Ascending aorta (tissue), 2 donors: ENCODE measurements at regions of chr15 and their contacts with region 1.

Region 1: DNA sequence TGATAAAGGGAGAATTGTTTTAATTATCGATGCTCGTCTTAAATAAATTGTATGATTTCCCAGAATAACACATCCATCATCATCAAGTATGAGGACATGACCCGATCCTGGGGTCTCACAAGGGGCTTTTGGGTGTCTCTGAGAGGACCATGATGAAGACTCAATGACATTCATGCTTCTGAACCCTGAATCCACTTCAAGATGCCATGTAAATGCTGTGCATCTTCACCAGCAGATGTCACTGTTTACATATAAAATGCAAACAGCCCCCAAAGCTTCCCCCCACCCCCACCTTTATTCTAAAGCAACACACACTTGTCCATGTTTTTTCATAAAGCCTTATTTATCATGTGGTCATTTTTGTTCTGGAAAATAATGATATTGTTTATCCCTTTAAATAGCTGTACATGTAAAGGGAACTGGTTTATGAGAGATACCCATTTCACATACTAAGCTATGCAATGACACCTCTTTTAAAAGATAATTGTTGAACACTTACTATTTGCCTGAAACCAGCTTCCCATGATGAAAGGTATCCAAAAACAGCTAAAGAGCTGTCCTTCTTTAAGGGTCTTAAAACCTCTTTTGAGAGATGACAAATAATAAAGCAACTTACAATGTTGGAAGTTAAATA is 69.7 kb upstream of the UBE3A start:
- DNase-seq: no peak
- H3K4me3 ChIP-seq: no peak overlapping the region
- H3K27ac ChIP-seq: no peak overlapping the region
- H3K4me1 ChIP-seq: peaks cover 0 to 6% of the 10 kb centered on the region in 2 donors
- H3K27me3 ChIP-seq: no peaks in the 10 kb centered on the region
- CTCF ChIP-seq: peak; percentile 42 to 86 (median 73)

Region 2: GRCh38 chr15:25469377-25469776 is 39.1 kb before region 1 on chr15:
- intact Hi-C with region 1: no loop called
- DNase-seq: no peak
- H3K4me3 ChIP-seq: no peak overlapping the region
- H3K27ac ChIP-seq: no peak overlapping the region
- H3K4me1 ChIP-seq: no peaks in the 10 kb centered on the region
- H3K27me3 ChIP-seq: no peaks in the 10 kb centered on the region
- CTCF ChIP-seq: no peak

Region 3: GRCh38 chr15:25641762-25642161 is 133.3 kb after region 1 on chr15:
- intact Hi-C with region 1: no loop called
- DNase-seq: peak in 1 of 2 donors; percentile 8
- H3K4me3 ChIP-seq: no peak overlapping the region
- H3K27ac ChIP-seq: no peak overlapping the region
- H3K4me1 ChIP-seq: no peaks in the 10 kb centered on the region
- H3K27me3 ChIP-seq: no peaks in the 10 kb centered on the region
- CTCF ChIP-seq: no peak

Region 4: DNA sequence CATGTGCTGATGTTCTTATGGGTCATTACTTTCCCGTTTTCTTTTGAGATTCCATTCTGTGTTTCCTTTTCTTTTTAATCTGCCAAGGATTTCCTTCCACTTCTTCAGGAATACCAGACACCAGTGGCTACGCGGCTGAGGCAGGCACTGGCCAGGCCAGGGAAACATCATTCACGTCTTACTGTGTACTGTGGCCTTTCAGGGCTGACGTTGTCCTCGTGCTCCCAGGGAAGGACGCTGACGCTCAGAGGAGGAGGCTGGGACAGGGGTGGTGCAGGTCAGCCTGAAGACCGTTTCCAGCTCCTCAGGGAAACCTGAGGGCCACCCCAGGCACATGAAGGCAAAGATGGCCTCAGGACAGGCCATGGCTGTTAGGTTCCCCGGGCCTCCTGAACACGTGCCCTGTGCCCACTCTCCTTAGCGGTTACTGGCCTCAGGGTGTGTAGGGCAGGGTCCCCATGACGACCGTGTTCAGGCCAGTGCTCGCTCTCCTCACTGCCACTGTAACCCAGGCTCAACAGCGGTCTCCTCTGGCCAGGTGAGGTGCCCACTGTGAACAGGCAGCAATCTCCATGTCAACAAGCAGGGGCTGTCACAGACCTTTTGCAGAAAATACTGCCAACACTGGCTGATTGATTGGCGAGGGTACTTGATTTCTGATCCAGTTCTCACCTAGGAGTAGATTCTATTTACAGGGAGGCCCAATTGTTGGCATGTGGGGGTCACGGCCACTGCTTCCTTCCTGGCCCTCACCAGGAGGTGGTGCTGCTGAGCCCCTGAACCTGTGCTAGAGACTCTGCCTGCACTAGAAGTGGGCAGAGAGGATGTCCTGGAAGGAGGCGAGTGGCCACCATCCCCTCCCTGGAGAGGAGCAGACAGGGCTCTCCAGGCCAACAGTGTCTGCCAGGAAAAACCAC is 185.1 kb after region 1 on chr15:
- intact Hi-C with region 1: loop called (anchors 2 kb)
- DNase-seq: peak in 1 of 2 donors; percentile 73
- H3K4me3 ChIP-seq: no peak overlapping the region
- H3K27ac ChIP-seq: peak overlapping the region; percentile 47 to 59
- H3K4me1 ChIP-seq: peaks cover 0 to 20% of the 10 kb centered on the region in 2 donors
- H3K27me3 ChIP-seq: no peaks in the 10 kb centered on the region
- CTCF ChIP-seq: peak; percentile 50 to 68 (median 62)

Region 5: DNA sequence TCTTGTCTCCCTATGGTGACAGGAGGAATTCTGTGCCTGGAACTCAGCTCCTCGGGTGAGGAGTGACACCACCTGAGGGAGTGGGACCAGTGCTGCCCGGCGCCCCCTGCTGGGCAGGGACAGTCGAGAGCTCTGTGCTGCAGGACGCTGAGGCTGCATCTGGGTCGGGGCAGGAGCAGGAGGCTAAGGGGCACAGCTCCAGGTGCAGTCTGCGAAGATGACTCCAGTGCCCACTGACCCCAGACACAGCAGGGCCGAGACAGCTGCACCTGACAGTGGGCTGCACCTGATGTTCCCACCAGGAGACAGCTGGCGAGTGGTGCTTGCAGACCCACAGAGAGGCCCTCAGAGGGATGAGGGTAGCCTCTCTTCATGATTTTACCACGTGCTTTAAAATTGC is 201.7 kb after region 1 on chr15:
- intact Hi-C with region 1: loop called (anchors 1 kb)
- DNase-seq: peak in 1 of 2 donors; percentile 63
- H3K4me3 ChIP-seq: no peak overlapping the region
- H3K27ac ChIP-seq: no peak overlapping the region
- H3K4me1 ChIP-seq: no peaks in the 10 kb centered on the region
- H3K27me3 ChIP-seq: no peaks in the 10 kb centered on the region
- CTCF ChIP-seq: peak; percentile 26 to 68 (median 55)

Region 6: GRCh38 chr15:25933456-25934158 is 425.1 kb after region 1 on chr15:
- intact Hi-C with region 1: loop called (anchors 2 kb)
- DNase-seq: peak in 1 of 2 donors; percentile 88
- H3K4me3 ChIP-seq: peak overlapping the region; percentile 31 to 53
- H3K27ac ChIP-seq: peak overlapping the region in 1 of 2 donors; percentile 22
- H3K4me1 ChIP-seq: peaks cover 0 to 17% of the 10 kb centered on the region in 2 donors
- H3K27me3 ChIP-seq: no peaks in the 10 kb centered on the region
- CTCF ChIP-seq: peak; percentile 61 to 76 (median 71)

Region 7: GRCh38 chr15:26070095-26070532 is 561.6 kb after region 1 on chr15:
- intact Hi-C with region 1: no loop called
- DNase-seq: no peak
- H3K4me3 ChIP-seq: no peak overlapping the region
- H3K27ac ChIP-seq: no peak overlapping the region
- H3K4me1 ChIP-seq: no peaks in the 10 kb centered on the region
- H3K27me3 ChIP-seq: no peaks in the 10 kb centered on the region
- CTCF ChIP-seq: no peak

Region 8: DNA sequence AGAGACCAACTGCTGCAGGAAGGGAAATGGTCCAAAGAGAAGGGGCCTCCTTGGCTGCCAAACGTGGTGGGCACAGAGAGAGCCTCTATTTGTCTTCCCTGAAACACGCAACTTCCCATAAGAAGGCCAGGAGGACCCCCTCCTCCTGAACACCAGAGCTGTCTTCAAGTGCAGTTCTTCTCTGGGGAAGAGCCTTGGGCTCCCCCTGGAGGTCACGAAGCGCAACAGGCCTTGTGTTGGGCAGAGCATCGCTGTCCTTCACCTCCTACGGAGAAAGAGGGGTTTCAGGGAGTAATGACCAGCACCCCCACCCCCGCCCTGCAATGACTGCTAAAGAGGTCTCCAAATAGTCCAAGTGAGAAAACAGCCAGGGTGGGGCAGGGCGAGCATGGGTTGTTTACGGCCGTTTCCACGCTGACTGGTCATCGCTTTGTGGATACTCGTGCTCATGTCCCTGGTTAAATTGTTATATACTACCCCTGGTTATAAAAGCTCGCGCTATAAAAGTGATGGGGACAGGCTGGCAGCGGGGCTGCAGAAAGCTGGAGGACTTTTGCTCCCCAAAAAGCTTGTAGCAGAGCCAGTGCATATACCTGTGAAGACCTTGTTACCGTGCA is 752.1 kb after region 1 on chr15:
- intact Hi-C with region 1: loop called (anchors 1 kb)
- DNase-seq: no peak
- H3K4me3 ChIP-seq: no peak overlapping the region
- H3K27ac ChIP-seq: no peak overlapping the region
- H3K4me1 ChIP-seq: no peaks in the 10 kb centered on the region
- H3K27me3 ChIP-seq: no peaks in the 10 kb centered on the region
- CTCF ChIP-seq: peak; percentile 50 to 76 (median 68)

Region 9: GRCh38 chr15:26864664-26865191 is 1356.2 kb after region 1 on chr15:
- intact Hi-C with region 1: loop called (anchors 10 kb)
- DNase-seq: no peak
- H3K4me3 ChIP-seq: no peak overlapping the region
- H3K27ac ChIP-seq: no peak overlapping the region
- H3K4me1 ChIP-seq: no peaks in the 10 kb centered on the region
- H3K27me3 ChIP-seq: peaks cover 10% of the 10 kb centered on the region
- CTCF ChIP-seq: peak in 2 of 3 experiments; percentile 17 to 48